ENCODE measurements at regions of chr17 and their contacts with region 1.

Region 1: GRCh38 chr17:81558941-81559806 is 7.0 kb upstream of the FAAP100 start:
- DNase-seq: no peak
- ATAC-seq: no peak
- H3K4me3 ChIP-seq: no peak overlapping the region
- H3K4me3 Mint-ChIP-seq: no peak overlapping the region
- H3K27ac ChIP-seq: no peak overlapping the region
- H3K27ac Mint-ChIP-seq: no peak overlapping the region
- H3K4me1 ChIP-seq: peaks cover 31 to 51% of the 10 kb centered on the region in 2 donors
- H3K4me1 Mint-ChIP-seq: peaks cover 37% of the 10 kb centered on the region
- H3K27me3 ChIP-seq: no peaks in the 10 kb centered on the region
- H3K27me3 Mint-ChIP-seq: no peaks in the 10 kb centered on the region
- CTCF ChIP-seq: no peak

Region 2: GRCh38 chr17:81519284-81519955 is 39.8 kb before region 1 on chr17:
- CTCF ChIA-PET with region 1: interaction called, 5 read pairs
- POLR2A ChIA-PET with region 1: interaction called, 6 read pairs
- intact Hi-C with region 1: loop called (anchors 1 kb)
- DNase-seq: peak; percentile 88
- ATAC-seq: peak; percentile 14
- H3K4me3 ChIP-seq: peak overlapping the region in 4 of 5 experiments; percentile 47 to 94 (median 64)
- H3K4me3 Mint-ChIP-seq: peak overlapping the region; percentile 98
- H3K27ac ChIP-seq: peak overlapping the region; percentile 97 to 98
- H3K27ac Mint-ChIP-seq: peak overlapping the region; percentile 86
- H3K4me1 ChIP-seq: peaks cover 37 to 55% of the 10 kb centered on the region in 2 donors
- H3K4me1 Mint-ChIP-seq: peaks cover 42% of the 10 kb centered on the region
- H3K27me3 ChIP-seq: no peaks in the 10 kb centered on the region
- H3K27me3 Mint-ChIP-seq: no peaks in the 10 kb centered on the region
- CTCF ChIP-seq: peak; percentile 87